T-cell (primary cell): ENCODE measurements at regions of chr5 and their contacts with region 1.

Region 1: DNA sequence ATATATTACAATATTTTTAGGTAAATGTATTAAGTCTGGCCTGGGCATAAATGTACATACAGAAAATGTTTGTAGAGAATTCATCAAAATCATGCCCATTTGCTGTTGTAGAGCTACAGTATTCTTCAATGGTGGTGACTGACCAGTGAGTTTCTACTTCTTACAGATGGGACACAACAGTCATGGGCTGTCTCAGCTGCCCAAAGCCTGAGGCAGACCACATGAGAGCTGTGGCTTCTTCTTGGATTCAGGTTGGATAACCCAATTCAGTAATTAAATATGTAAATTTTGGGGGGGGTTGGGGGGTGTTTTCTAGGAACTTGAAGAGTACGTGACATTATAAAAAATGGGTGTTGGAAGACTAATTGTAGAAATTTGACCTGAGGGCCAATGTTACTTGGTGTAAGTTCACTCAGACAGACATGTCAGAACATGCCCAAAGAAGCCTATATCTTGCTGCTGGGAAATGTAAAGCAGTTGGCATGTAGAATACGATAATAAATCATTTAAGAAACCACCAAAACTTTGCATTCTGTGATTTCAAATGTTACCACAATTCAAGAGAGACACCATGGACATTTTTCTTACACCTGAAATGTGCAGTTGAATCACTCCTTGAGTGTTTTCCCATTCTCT is 17.9 kb downstream of the STARD4 start:
- DNase-seq: no peak
- ATAC-seq: no peak
- H3K4me3 ChIP-seq: no peak overlapping the region
- H3K4me3 Mint-ChIP-seq: no peak overlapping the region
- H3K27ac ChIP-seq: no peak overlapping the region
- H3K27ac Mint-ChIP-seq: peak overlapping the region; percentile 46 to 53
- H3K4me1 ChIP-seq: no peaks in the 10 kb centered on the region
- H3K4me1 Mint-ChIP-seq: peaks cover 13 to 25% (median 24%) of the 10 kb centered on the region in 3 donors
- H3K27me3 ChIP-seq: no peaks in the 10 kb centered on the region
- H3K27me3 Mint-ChIP-seq: no peaks in the 10 kb centered on the region

Region 2: DNA sequence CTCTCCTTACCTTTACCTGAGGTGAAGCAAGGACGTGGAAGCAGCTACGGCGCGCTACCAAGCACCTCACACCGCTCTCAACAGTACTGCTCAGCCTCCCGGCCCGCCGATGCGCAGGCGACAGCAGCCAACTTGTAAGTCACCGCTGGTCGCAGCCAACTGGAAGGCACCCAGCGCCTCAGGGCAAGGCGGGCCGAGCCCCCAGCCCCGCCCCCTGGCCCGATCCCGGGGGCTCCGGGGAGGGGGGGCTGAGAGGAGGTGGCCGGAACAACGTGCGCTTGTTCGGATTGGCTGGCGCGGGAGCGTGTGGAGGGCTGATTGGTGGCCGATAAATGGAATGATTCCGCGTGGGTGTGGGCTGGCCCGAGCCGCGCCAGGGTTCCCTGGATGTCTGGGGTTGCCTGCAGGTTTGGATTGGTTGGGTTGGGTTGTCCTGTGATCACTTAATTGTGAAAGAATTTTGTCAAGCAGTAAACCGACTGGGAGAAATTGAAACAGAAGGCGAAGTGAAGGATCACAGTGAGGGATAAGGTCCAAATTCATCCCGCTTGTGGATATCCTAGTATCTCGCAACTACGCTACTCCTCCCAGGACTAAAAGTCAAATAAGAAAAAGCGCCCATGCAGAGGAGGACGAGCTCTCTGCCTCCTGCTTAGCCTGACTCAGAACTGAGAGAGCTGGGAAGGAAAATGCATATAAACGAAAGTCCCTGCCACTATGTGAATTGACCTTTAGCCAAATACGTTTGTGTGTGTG is 18.1 kb after region 1 on chr5 and contains the start of gene STARD4:
- CTCF ChIA-PET with region 1: interaction called in 1 of 2 experiments, 5 read pairs
- POLR2A ChIA-PET with region 1: interaction called in 1 of 2 experiments, 17 read pairs
- DNase-seq: peak; percentile 84 to 96 (median 91)
- ATAC-seq: peak; percentile 93 to 97 (median 94)
- H3K4me3 ChIP-seq: peak within 1 kb of the TSS; percentile 77 to 93
- H3K4me3 Mint-ChIP-seq: peak within 1 kb of the TSS; percentile 98 to 99 (median 99)
- H3K27ac ChIP-seq: peak within 1 kb of the TSS; percentile 81
- H3K27ac Mint-ChIP-seq: peak within 1 kb of the TSS; percentile 95 to 99
- H3K4me1 ChIP-seq: peaks cover 9 to 11% of the 10 kb centered on the region in 2 experiments
- H3K4me1 Mint-ChIP-seq: peaks cover 19 to 47% (median 43%) of the 10 kb centered on the region in 3 donors
- H3K27me3 ChIP-seq: no peaks in the 10 kb centered on the region
- H3K27me3 Mint-ChIP-seq: no peaks in the 10 kb centered on the region
- total RNA-seq, gene STARD4: 10.2 to 16.5 (median 12.0) TPM